Right cardiac atrium (tissue), 5 donors: ENCODE measurements at regions of chr5 and their contacts with region 1.

Region 1: GRCh38 chr5:14871210-14872069 is at the start of gene ANKH:
- DNase-seq: peak; percentile 86 to 94 (median 94)
- ATAC-seq: peak; percentile 89 to 93
- H3K4me3 ChIP-seq: peak within 1 kb of the TSS; percentile 93
- H3K27ac ChIP-seq: peak within 1 kb of the TSS; percentile 96
- H3K4me1 ChIP-seq: peaks cover 3% of the 10 kb centered on the region
- H3K27me3 ChIP-seq: no peaks in the 10 kb centered on the region
- total RNA-seq, gene ANKH: 132 to 155 (median 138) TPM

Region 2: GRCh38 chr5:14664302-14665100 is 206.9 kb before region 1 on chr5 and contains the start of gene OTULIN:
- intact Hi-C with region 1: no loop called
- DNase-seq: peak; percentile 94 to 97 (median 96)
- ATAC-seq: peak; percentile 98 to 99
- H3K4me3 ChIP-seq: peak within 1 kb of the TSS; percentile 91
- H3K27ac ChIP-seq: peak within 1 kb of the TSS; percentile 96
- H3K4me1 ChIP-seq: peaks cover 2% of the 10 kb centered on the region
- H3K27me3 ChIP-seq: no peaks in the 10 kb centered on the region
- total RNA-seq, gene OTULIN: 18.2 to 20.4 (median 19.2) TPM

Region 3: DNA sequence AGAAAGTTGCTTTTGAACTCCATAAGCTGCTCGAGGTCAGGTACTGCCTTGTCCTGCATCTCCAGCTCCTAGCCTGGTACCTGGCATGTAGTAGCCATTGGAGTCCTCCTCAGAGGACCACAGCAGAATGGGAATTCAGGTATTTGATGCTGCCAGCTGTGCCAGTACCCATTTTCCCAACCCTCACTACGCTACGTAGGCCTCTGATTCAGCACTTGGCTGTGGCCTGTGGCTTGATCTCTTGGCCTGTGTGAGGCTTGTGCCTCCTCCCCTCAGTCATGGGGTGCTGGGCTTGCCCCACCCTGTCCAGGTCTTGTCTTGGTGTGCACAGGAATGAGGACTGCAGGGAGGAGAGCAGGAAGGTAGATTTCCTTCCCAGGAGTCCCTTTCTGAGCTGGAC is 195.1 kb before region 1 on chr5:
- intact Hi-C with region 1: no loop called
- DNase-seq: peak in 1 of 3 donors; percentile 49
- ATAC-seq: peak; percentile 59 to 65
- H3K4me3 ChIP-seq: no peak overlapping the region
- H3K27ac ChIP-seq: peak overlapping the region; percentile 47
- H3K4me1 ChIP-seq: peaks cover 29% of the 10 kb centered on the region
- H3K27me3 ChIP-seq: no peaks in the 10 kb centered on the region

Region 4: DNA sequence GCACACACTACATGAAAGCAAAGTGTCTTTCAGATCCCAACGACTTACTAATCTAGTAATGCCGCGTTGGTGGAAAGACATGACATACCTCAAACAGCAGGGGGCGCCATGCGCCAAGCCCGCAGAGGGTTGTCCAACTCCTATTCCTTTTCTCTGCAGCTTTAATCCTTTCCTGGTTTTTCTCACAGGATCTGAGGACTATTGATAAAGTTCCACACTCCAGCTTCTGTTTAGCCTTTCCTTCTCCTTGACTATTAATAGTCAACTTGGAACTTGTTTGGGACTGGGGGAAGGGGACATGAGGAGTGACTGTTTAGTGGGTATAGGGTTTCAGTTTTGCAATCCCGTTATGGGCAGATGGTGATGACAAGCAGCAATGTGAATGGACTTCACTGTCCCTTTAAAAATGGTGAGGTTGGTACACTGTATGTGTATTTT is 144.0 kb before region 1 on chr5:
- intact Hi-C with region 1: loop called in 2 of 4 experiments (anchors 5 to 10 kb)
- DNase-seq: peak; percentile 76 to 89 (median 88)
- ATAC-seq: peak; percentile 74 to 80
- H3K4me3 ChIP-seq: no peak overlapping the region
- H3K27ac ChIP-seq: no peak overlapping the region
- H3K4me1 ChIP-seq: peaks cover 2% of the 10 kb centered on the region
- H3K27me3 ChIP-seq: no peaks in the 10 kb centered on the region

Region 5: GRCh38 chr5:14739538-14739937 is 131.9 kb before region 1 on chr5:
- intact Hi-C with region 1: loop called in 2 of 4 experiments (anchors 5 to 10 kb)
- DNase-seq: no peak
- ATAC-seq: peak in 1 of 2 donors; percentile 78
- H3K4me3 ChIP-seq: no peak overlapping the region
- H3K27ac ChIP-seq: no peak overlapping the region
- H3K4me1 ChIP-seq: peaks cover 5% of the 10 kb centered on the region
- H3K27me3 ChIP-seq: no peaks in the 10 kb centered on the region

Region 6: GRCh38 chr5:14996997-14997396 is 125.6 kb after region 1 on chr5:
- intact Hi-C with region 1: loop called in 2 of 4 experiments (anchors 10 kb)
- DNase-seq: no peak
- ATAC-seq: no peak
- H3K4me3 ChIP-seq: no peak overlapping the region
- H3K27ac ChIP-seq: no peak overlapping the region
- H3K4me1 ChIP-seq: no peaks in the 10 kb centered on the region
- H3K27me3 ChIP-seq: no peaks in the 10 kb centered on the region

Region 7: DNA sequence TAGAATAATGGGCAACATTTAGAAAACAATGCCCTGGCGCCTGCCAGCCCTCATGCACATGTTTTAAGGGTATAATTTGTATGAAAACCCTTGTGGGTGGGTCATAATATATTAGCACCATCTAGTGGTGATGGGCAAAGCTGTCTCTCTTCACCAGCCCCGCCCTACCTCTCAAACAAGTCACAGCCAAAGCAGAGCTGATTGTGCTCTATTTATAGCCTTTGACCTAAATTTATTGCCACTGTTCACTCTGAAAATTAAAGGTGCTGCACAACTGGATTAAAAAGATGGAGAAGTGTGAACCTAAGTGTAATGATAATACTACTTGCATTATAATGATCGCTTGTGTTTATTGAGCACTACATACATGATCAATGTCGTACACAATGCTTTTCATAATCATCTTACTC is 132.1 kb after region 1 on chr5:
- intact Hi-C with region 1: loop called in 3 of 4 experiments (anchors 5 to 10 kb)
- DNase-seq: peak; percentile 47 to 72 (median 67)
- ATAC-seq: peak; percentile 87 to 89
- H3K4me3 ChIP-seq: no peak overlapping the region
- H3K27ac ChIP-seq: no peak overlapping the region
- H3K4me1 ChIP-seq: no peaks in the 10 kb centered on the region
- H3K27me3 ChIP-seq: no peaks in the 10 kb centered on the region